Vagina (tissue), 2 donors: ENCODE measurements at regions of chr6 and their contacts with region 1.

Region 1: DNA sequence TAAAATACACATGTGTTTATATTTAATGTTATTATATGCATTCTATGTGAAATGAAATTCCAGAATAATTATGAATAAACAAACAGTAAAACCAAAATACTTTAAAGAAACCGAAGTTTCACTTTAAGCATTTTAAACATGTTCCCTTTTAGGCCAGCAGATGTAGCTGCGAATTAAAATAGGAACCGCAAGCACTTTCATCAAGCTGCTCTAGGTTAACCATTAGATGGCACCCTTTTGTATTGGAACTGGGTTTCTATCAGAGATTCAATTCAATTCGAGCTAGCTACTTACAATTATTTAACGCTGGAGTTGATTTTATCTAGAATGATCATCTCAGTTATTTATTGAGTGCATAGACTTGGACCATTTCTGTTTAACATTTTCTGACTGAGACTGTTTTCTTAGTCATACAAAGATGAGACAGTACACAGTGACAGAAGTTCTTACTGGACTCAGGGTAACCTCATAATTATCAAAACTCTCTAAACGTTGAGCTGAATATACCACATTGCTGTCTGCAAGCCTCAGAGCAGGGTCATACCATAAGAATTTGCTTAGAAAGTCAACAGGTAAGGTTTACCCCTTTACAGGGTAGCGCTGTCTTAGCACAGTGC is 8.5 kb downstream of the TMEM242 start:
- DNase-seq: no peak
- H3K4me3 ChIP-seq: no peak overlapping the region
- H3K27ac ChIP-seq: no peak overlapping the region
- H3K4me1 ChIP-seq: peaks cover 13% of the 10 kb centered on the region
- H3K27me3 ChIP-seq: no peaks in the 10 kb centered on the region
- CTCF ChIP-seq: peak; percentile 81 to 87 (median 83)
- POLR2A ChIP-seq: no peak

Region 2: GRCh38 chr6:157379656-157380454 is 65.0 kb after region 1 on chr6:
- intact Hi-C with region 1: loop called (anchors 5 kb)
- DNase-seq: peak in 1 of 2 donors; percentile 95
- H3K4me3 ChIP-seq: peak overlapping the region; percentile 75 to 85
- H3K27ac ChIP-seq: peak overlapping the region; percentile 91
- H3K4me1 ChIP-seq: peaks cover 25% of the 10 kb centered on the region
- H3K27me3 ChIP-seq: no peaks in the 10 kb centered on the region
- CTCF ChIP-seq: no peak
- POLR2A ChIP-seq: peak in 1 of 2 donors; percentile 26

Region 3: GRCh38 chr6:157597446-157598312 is 282.9 kb after region 1 on chr6:
- intact Hi-C with region 1: loop called (anchors 5 kb)
- DNase-seq: peak in 1 of 2 donors; percentile 62
- H3K4me3 ChIP-seq: no peak overlapping the region
- H3K27ac ChIP-seq: peak overlapping the region; percentile 76
- H3K4me1 ChIP-seq: peaks cover 21% of the 10 kb centered on the region
- H3K27me3 ChIP-seq: no peaks in the 10 kb centered on the region
- CTCF ChIP-seq: peak in 1 of 3 experiments; percentile 34
- POLR2A ChIP-seq: no peak